ENCODE measurements at regions of chr1 and their contacts with region 1.

Region 1: DNA sequence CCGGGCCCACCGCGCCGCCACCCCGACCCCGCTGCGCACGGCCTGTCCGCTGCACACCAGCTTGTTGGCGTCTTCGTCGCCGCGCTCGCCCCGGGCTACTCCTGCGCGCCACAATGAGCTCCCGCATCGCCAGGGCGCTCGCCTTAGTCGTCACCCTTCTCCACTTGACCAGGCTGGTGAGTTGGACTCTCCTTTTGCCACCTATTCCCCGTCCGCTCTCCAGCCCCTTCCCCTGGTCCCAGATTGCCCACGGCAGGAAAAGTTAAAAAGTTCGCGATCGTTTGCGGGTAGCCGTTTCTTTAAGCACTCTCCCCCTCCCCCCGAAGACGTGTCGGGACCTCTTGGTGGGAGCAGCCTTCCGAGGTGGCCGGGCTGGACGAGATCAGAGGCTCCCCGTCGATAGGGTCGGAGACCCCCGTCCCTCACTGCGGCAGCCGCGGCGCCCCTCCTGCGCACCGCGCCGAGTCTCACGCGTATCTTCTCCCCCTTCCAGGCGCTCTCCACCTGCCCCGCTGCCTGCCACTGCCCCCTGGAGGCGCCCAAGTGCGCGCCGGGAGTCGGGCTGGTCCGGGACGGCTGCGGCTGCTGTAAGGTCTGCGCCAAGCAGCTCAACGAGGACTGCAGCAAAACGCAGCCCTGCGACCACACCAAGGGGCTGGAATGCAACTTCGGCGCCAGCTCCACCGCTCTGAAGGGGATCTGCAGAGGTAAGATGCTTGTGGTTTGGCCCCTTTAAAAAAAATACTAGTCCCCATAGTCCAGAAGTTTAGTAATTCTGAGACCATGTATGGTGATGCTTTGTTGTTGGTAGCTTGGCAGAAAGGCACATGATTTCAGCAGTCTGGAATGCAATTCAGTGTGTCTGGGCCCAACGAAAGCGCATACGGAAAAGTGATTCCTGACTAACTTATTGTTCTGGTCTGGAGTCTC is 576 bp downstream of the CCN1 start:
- DNase-seq: peak; percentile 69 to 81
- H3K4me3 ChIP-seq: peak overlapping the region; percentile 65
- H3K4me3 Mint-ChIP-seq: peak overlapping the region; percentile 83
- H3K27ac Mint-ChIP-seq: peak overlapping the region; percentile 92
- H3K4me1 ChIP-seq: peaks cover 45% of the 10 kb centered on the region
- H3K4me1 Mint-ChIP-seq: peaks cover 28% of the 10 kb centered on the region
- H3K27me3 ChIP-seq: no peaks in the 10 kb centered on the region
- H3K27me3 Mint-ChIP-seq: no peaks in the 10 kb centered on the region
- CTCF ChIP-seq: peak; percentile 46 to 72

Region 2: GRCh38 chr1:85344256-85344694 is 236.9 kb before region 1 on chr1:
- CTCF ChIA-PET with region 1: no interaction called
- POLR2A ChIA-PET with region 1: interaction called, 3 read pairs
- intact Hi-C with region 1: loop called (anchors 1 kb)
- DNase-seq: peak; percentile 50 to 53
- H3K4me3 ChIP-seq: no peak overlapping the region
- H3K4me3 Mint-ChIP-seq: no peak overlapping the region
- H3K27ac Mint-ChIP-seq: peak overlapping the region; percentile 32
- H3K4me1 ChIP-seq: peaks cover 16% of the 10 kb centered on the region; the same call in 1 of the 2 replicates
- H3K4me1 Mint-ChIP-seq: peaks cover 21% of the 10 kb centered on the region
- H3K27me3 ChIP-seq: no peaks in the 10 kb centered on the region
- H3K27me3 Mint-ChIP-seq: no peaks in the 10 kb centered on the region
- CTCF ChIP-seq: peak in 1 of 2 experiments; percentile 78

Region 3: DNA sequence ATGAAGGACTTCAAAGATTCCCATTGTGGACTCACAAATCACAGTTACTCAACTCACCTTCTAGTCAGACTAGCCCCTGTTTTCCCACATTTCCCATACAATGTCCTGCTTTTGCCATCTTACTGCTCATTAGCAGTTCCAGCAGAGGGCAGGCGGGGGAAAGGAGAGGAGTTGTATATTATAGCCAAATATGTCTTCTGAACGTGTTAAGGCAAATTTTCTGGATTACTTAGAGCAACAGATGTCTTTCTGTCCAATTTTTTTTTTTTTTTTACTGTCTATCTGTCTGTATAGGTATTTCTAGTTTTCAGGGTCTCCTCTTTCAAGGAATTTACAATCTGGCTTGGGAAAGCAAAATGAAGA is 86.3 kb before region 1 on chr1:
- CTCF ChIA-PET with region 1: interaction called, 4 read pairs
- POLR2A ChIA-PET with region 1: no interaction called
- intact Hi-C with region 1: loop called (anchors 2 kb)
- DNase-seq: peak in 1 of 2 experiments; percentile 42
- H3K4me3 ChIP-seq: no peak overlapping the region
- H3K4me3 Mint-ChIP-seq: no peak overlapping the region
- H3K27ac Mint-ChIP-seq: no peak overlapping the region
- H3K4me1 ChIP-seq: no peaks in the 10 kb centered on the region; the same call in 1 of the 2 replicates
- H3K4me1 Mint-ChIP-seq: peaks cover 15% of the 10 kb centered on the region
- H3K27me3 ChIP-seq: no peaks in the 10 kb centered on the region
- H3K27me3 Mint-ChIP-seq: no peaks in the 10 kb centered on the region
- CTCF ChIP-seq: peak in 1 of 2 experiments; percentile 53

Region 4: GRCh38 chr1:85607126-85607912 is 26.2 kb after region 1 on chr1:
- CTCF ChIA-PET with region 1: interaction called, 11 read pairs
- POLR2A ChIA-PET with region 1: interaction called, 17 read pairs
- intact Hi-C with region 1: loop called (anchors 1 kb)
- DNase-seq: peak; percentile 79 to 90
- H3K4me3 ChIP-seq: no peak overlapping the region
- H3K4me3 Mint-ChIP-seq: peak overlapping the region; percentile 68
- H3K27ac Mint-ChIP-seq: peak overlapping the region; percentile 95
- H3K4me1 ChIP-seq: peaks cover 66% of the 10 kb centered on the region
- H3K4me1 Mint-ChIP-seq: peaks cover 72% of the 10 kb centered on the region
- H3K27me3 ChIP-seq: no peaks in the 10 kb centered on the region
- H3K27me3 Mint-ChIP-seq: no peaks in the 10 kb centered on the region
- CTCF ChIP-seq: no peak

Region 5: DNA sequence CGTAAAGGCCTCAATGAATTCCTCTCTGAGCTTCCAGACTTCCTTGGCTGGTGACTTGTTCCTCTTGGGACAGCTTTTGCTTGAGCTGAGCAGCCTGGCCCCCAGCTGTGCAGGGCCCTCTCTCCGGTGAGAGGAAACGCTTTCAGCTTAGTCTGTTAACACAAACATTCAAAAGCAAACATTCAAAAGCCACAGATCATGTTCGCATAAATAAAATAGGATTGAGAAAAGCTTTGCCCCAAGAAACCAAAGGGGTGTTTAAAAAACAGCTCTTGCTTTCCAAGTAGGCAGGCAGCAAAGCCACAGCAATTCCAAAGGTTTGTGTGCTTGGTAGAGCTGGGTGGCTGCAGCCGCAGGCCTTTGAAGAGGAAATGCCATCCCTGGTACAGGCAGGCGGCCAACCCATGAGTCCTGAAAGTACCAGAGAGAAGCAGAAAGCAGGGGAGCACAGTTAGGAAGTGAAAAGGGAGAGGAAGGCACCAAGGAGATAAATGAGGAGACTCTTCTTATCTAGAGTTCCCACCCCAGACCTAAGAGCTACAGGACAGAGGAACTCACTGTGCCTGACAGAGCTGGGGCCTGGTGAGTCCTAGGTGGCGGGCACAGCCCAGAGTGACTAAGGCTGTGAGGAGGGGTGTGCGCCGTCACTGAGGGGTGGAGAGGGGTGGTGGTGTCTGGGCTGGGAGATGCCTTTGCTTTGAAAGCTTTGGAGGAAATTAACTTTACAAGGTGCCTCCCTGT is 47.8 kb after region 1 on chr1:
- CTCF ChIA-PET with region 1: no interaction called
- POLR2A ChIA-PET with region 1: interaction called, 4 read pairs
- intact Hi-C with region 1: loop called (anchors 5 kb)
- DNase-seq: no peak
- H3K4me3 ChIP-seq: no peak overlapping the region
- H3K4me3 Mint-ChIP-seq: no peak overlapping the region
- H3K27ac Mint-ChIP-seq: no peak overlapping the region
- H3K4me1 ChIP-seq: no peaks in the 10 kb centered on the region
- H3K4me1 Mint-ChIP-seq: peaks cover 10% of the 10 kb centered on the region
- H3K27me3 ChIP-seq: no peaks in the 10 kb centered on the region
- H3K27me3 Mint-ChIP-seq: no peaks in the 10 kb centered on the region
- CTCF ChIP-seq: no peak

Measured in Caco-2 (cell line).